ENCODE measurements at regions of chr1 and their contacts with region 1.

Region 1: DNA sequence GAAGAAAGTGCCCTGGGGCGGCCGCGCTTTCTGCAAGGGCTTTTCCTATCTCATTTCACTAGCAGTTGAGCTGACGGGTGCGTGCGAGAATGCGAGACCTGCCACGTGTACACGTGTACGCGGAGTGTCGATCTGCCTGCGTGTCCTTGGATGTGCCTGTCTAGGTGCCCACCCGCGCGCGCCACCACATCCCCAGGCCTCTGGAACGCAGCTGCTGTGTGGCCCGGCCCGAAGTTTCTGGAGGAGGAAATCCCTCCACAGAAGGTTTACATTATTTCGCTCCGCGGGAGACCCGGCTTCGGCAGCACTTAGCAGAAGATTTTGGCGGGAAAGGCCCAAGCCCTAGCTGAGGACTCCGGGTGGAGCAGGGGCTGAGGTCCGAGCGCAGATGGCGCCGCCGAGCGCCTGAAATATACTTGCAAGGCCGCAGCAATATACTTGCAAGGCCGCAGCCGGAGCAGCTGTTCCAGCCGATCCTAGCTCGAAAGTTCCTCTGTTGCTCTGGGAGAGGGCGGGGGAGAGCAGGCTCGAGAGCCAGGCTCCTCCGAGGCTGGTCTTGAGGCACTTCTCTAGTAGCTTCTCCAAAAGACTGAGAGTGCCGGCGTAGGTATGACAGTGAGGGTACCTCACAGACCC is 3.9 kb downstream of the TBX15 start:
- DNase-seq: no peak
- H3K4me3 Mint-ChIP-seq: no peak overlapping the region
- H3K27ac Mint-ChIP-seq: no peak overlapping the region
- H3K4me1 Mint-ChIP-seq: peaks cover 26% of the 10 kb centered on the region
- H3K27me3 Mint-ChIP-seq: peaks cover 80% of the 10 kb centered on the region

Region 2: GRCh38 chr1:118905196-118905595 is 79.0 kb before region 1 on chr1:
- CTCF ChIA-PET with region 1: no interaction called
- POLR2A ChIA-PET with region 1: no interaction called
- intact Hi-C with region 1: no loop called
- DNase-seq: no peak
- H3K4me3 Mint-ChIP-seq: no peak overlapping the region
- H3K27ac Mint-ChIP-seq: no peak overlapping the region
- H3K4me1 Mint-ChIP-seq: no peaks in the 10 kb centered on the region
- H3K27me3 Mint-ChIP-seq: no peaks in the 10 kb centered on the region

Region 3: GRCh38 chr1:118949315-118949714 is 34.9 kb before region 1 on chr1:
- CTCF ChIA-PET with region 1: no interaction called
- POLR2A ChIA-PET with region 1: no interaction called
- intact Hi-C with region 1: no loop called
- DNase-seq: no peak
- H3K4me3 Mint-ChIP-seq: no peak overlapping the region
- H3K27ac Mint-ChIP-seq: no peak overlapping the region
- H3K4me1 Mint-ChIP-seq: no peaks in the 10 kb centered on the region
- H3K27me3 Mint-ChIP-seq: no peaks in the 10 kb centered on the region

Region 4: DNA sequence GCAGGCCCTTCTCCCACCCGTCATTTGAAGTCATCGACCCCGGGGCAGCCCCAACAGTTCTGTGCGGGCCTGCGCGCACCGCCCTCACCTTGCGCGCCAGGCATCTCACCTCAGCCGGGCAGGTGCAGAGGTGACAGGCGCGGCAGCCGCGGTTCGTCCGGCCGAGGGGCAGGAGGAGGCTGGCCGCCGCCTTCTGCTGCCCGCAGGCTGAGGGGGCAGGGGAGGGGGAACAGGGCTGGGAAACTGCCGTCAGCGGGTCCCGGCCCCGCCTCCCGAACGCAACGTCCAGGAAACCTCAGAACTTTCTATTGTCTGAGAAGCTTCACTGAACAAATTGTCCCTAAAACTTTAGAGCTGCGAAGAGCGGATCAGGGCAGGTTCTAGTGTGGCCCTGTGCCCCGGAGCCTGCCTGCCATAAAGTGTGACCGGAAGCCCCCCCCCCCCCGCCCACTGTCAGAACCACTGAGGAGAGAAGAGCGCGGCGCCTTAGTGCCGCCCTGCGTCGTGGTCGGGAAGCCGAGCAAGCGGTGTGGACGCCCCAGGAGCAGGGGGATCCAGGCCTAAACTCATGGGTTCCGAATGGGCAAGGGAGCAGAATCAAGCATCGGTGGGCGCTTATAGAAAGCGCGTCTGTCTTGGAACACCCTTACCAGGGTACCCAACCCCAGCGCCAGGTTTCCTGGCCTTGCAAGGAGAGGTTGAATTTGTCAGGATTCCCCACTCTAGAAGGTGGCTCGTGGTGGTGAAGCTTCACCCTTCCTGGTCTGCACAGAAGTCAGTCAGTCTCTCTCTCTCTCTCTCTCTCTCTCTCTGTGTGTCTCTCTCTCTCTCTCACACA is 17.2 kb after region 1 on chr1:
- CTCF ChIA-PET with region 1: no interaction called
- POLR2A ChIA-PET with region 1: no interaction called
- intact Hi-C with region 1: loop called (anchors 2 kb)
- DNase-seq: no peak
- H3K4me3 Mint-ChIP-seq: no peak overlapping the region
- H3K27ac Mint-ChIP-seq: no peak overlapping the region
- H3K4me1 Mint-ChIP-seq: peaks cover 8% of the 10 kb centered on the region
- H3K27me3 Mint-ChIP-seq: peaks cover 78% of the 10 kb centered on the region

Region 5: DNA sequence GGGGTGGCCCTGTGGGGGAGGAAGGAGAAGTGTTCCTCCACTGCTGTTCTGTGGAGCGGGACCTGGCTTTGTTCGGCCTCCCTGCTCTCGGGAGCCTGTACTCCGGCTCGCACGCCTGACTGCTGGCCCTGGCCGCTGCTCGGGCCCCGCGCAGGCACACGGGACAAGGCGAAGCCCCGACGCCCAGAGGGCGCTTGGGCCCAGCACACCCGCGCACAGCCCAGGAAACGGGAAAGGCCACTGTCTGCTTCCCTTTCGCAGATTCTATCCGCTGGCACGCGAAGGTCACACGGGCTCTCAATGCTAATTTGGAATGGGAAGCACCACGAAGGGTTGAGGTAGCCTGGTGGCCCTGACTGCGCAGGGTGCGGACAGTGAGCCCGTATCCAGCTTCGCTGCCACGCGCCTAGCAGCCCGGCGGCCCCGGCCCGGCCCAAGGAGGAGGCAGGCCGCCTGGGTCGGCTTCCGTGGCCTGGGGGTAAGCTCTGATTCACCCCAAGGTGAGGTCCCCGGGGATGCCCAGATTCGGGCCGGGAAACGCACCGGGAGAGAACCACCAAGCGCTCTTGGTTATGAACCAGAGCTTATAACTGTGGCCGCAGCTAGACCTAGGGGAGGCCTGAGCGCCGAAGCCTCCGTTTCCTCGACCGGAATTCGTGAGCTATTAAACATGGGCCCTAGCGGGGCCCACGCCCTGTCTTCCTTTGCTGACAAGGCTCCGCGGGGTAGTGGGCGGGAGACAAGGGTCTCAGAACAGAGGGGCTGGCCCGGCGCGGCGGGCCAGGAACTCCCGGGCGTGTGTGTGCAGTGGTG is 23.7 kb after region 1 on chr1:
- CTCF ChIA-PET with region 1: no interaction called
- POLR2A ChIA-PET with region 1: no interaction called
- intact Hi-C with region 1: loop called (anchors 2 kb)
- DNase-seq: no peak
- H3K4me3 Mint-ChIP-seq: peak overlapping the region; percentile 30
- H3K27ac Mint-ChIP-seq: no peak overlapping the region
- H3K4me1 Mint-ChIP-seq: peaks cover 14% of the 10 kb centered on the region
- H3K27me3 Mint-ChIP-seq: peaks cover 72% of the 10 kb centered on the region